ENCODE measurements at regions of chr19 and their contacts with region 1.

Region 1: GRCh38 chr19:49869441-49870176 is 2.2 kb upstream of the PNKP start:
- DNase-seq: peak; percentile 100
- ATAC-seq: peak; percentile 87
- H3K4me3 ChIP-seq: peak overlapping the region; percentile 66
- H3K27ac ChIP-seq: peak overlapping the region; percentile 70
- H3K4me1 ChIP-seq: peaks cover 26% of the 10 kb centered on the region
- H3K27me3 ChIP-seq: no peaks in the 10 kb centered on the region
- CTCF ChIP-seq: no peak; a peak in 1 of 6 replicates
- EP300 ChIP-seq: no peak; a peak in 1 of 4 replicates
- POLR2A ChIP-seq: peak; percentile 56
- RAD21 ChIP-seq: no peak

Region 2: GRCh38 chr19:49487277-49488045 is 382.1 kb before region 1 on chr19 and contains the start of gene RPL13A:
- CTCF ChIA-PET with region 1: no interaction called
- POLR2A ChIA-PET with region 1: no interaction called
- RAD21 ChIA-PET with region 1: no interaction called
- SMC1A ChIA-PET with region 1: no interaction called
- in situ Hi-C with region 1: no loop called
- intact Hi-C with region 1: loop called (anchors 5 kb)
- DNase-seq: peak; percentile 98
- ATAC-seq: peak; percentile 92
- H3K4me3 ChIP-seq: peak within 1 kb of the TSS; percentile 97
- H3K27ac ChIP-seq: peak within 1 kb of the TSS; percentile 83
- H3K4me1 ChIP-seq: peaks cover 16% of the 10 kb centered on the region
- H3K27me3 ChIP-seq: no peaks in the 10 kb centered on the region
- CTCF ChIP-seq: no peak
- EP300 ChIP-seq: no peak
- POLR2A ChIP-seq: peak; percentile 100
- RAD21 ChIP-seq: no peak
- polyA plus RNA-seq, gene RPL13A: 4,595 to 5,196 TPM

Region 3: DNA sequence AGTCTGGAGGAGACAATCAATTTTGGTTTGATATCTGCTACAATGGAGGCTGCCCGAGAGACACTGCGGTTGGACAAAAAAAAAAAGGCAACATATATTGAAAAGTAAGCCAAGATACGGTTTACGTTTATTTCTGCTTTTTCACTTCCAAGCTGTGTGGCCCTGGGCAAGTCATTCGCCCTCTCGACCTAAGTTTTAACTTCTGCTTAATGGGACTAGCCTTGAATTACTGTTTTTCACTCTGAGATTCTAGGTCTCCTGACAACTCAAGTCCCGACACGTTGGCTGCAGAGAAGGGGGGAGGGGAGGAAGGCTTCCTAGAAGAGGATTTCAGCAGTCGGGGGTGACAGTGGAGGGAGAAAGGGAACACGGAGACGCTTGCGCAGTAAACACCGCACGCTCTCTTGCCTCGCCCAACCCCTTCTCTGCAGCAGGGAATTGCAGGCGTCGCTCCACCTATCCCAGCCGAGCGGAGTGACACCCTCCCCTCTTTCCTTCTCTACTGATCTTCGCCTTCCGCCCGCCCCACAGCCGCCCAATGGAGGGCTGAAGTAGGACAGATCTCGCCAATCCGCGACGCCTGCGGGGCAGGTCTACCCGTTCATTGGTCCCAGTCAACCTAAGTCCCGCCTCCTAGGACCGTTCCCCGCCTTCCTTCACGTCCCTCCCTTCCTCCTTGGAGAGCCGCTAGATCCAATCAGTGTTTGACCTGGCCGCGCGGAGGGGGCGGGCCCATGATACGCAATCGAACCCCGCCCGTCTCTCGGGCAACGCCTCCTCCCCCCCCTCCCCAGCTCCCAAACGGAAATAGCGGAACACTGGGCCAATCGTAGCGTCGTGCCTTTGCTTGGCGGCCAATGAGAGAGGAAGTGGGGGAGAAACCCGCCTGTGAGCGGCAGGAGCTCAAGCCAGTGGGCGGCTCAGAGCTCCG is 103.3 kb before region 1 on chr19:
- CTCF ChIA-PET with region 1: no interaction called
- POLR2A ChIA-PET with region 1: interaction called, 14 read pairs
- RAD21 ChIA-PET with region 1: interaction called, 7 read pairs
- SMC1A ChIA-PET with region 1: interaction called, 4 read pairs
- in situ Hi-C with region 1: no loop called
- intact Hi-C with region 1: loop called (anchors 5 kb)
- DNase-seq: peak; percentile 100
- ATAC-seq: peak; percentile 96
- H3K4me3 ChIP-seq: peak overlapping the region; percentile 89
- H3K27ac ChIP-seq: peak overlapping the region; percentile 89
- H3K4me1 ChIP-seq: peaks cover 15% of the 10 kb centered on the region; the same call in 1 of the 2 replicates
- H3K27me3 ChIP-seq: no peaks in the 10 kb centered on the region; a peak in 1 of 4 replicates
- CTCF ChIP-seq: no peak
- EP300 ChIP-seq: no peak
- POLR2A ChIP-seq: peak; percentile 88
- RAD21 ChIP-seq: no peak

Region 4: DNA sequence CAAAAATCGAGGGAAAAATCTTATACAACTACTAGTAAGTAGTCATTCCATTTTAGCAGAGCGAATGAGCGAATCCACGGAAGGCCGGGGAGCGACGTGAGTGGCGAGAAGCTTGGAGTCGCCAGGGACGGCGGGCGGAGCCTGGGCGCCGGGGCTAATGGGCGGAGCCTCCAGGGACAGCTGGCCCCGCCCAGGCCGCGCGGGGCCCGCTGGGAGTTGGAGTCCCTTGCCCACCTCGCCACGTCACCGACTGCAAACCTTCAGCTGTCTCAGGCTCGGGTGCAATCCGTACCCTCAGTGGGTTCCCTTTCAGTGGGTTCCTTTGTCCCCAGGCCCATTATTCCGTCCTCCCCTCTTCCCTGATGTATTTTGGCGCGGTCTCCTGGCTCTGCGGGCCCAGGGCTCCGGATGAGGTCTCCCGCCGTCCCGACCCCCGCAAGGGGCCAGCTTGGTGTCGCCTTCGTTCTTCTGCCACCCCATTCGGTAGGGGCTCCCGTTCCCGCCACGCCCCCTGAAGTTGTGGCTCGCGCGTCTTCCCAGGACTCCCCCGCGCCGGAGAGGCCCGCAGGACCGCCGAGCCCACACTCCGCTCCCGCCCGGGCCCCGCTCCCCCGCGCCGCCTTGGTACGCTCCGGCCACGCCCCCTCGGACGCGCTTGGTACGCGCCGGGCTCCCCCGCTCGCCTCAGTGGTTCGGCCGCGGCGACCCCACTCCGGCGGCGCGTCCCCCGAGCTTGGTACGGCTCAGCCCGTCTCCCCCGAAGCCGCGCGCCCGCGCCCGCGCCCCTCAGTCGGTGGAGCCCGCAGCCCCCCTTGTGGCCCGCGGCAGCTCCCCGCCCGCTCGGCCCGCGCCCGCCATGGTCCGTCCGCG is 18.9 kb before region 1 on chr19 and contains the start of gene PTOV1:
- CTCF ChIA-PET with region 1: interaction called, 6 read pairs
- POLR2A ChIA-PET with region 1: interaction called, 25 read pairs
- RAD21 ChIA-PET with region 1: interaction called, 9 read pairs
- SMC1A ChIA-PET with region 1: interaction called, 5 read pairs
- in situ Hi-C with region 1: no loop called
- intact Hi-C with region 1: no loop called
- DNase-seq: peak; percentile 59
- ATAC-seq: peak; percentile 91
- H3K4me3 ChIP-seq: peak within 1 kb of the TSS; percentile 71
- H3K27ac ChIP-seq: peak within 1 kb of the TSS; percentile 64
- H3K4me1 ChIP-seq: peaks cover 26% of the 10 kb centered on the region
- H3K27me3 ChIP-seq: no peaks in the 10 kb centered on the region
- CTCF ChIP-seq: no peak
- EP300 ChIP-seq: no peak
- POLR2A ChIP-seq: peak; percentile 87
- RAD21 ChIP-seq: no peak
- polyA plus RNA-seq, gene PTOV1: 3.2 to 10.6 TPM

Region 5: DNA sequence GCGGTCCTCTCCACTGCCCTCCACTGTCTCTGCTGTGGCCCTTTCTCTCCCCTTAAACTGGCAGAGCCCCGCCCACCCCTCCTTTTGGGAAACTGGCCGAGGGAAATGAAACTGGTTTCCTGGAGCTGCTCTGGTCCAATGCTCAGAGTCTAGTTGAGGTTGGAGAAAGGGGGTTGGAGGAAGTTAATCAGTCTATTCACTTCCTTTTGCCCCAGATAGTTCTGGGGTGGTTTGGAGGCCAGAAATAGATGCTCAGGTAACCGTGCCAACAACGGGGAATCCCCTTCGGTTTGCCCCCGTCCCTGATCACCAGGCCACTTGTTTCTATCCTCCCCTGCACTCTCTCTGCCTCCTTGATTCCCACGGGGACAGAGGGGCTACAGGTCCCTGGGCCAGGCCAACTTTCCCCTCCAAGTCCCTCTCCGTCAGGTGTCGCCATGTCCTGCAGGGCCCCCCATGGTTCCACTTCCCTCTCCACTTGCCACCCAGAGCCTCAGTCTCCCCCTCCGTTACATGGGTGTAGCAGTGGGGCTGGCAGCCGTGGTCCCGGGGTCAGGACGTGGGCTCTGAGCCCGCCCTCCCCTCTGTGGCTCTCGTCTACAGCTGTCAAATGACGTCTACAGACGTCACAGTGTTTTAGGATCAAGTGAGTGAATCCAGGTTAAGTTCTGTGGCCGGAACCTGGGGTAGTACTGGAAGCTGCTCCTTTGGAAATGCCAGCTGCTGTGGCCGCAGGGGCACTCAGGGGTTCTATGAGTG is 27.4 kb after region 1 on chr19 and contains the start of gene IL4I1:
- CTCF ChIA-PET with region 1: interaction called, 4 read pairs
- POLR2A ChIA-PET with region 1: interaction called, 16 read pairs
- RAD21 ChIA-PET with region 1: interaction called, 11 read pairs
- SMC1A ChIA-PET with region 1: interaction called, 9 read pairs
- in situ Hi-C with region 1: no loop called
- intact Hi-C with region 1: no loop called
- DNase-seq: peak; percentile 96
- ATAC-seq: peak; percentile 57
- H3K4me3 ChIP-seq: peak within 1 kb of the TSS; percentile 77
- H3K27ac ChIP-seq: peak within 1 kb of the TSS; percentile 91
- H3K4me1 ChIP-seq: peaks cover 40% of the 10 kb centered on the region
- H3K27me3 ChIP-seq: no peaks in the 10 kb centered on the region
- CTCF ChIP-seq: no peak
- EP300 ChIP-seq: peak; percentile 42 to 81; a peak in 3 of 4 replicates
- POLR2A ChIP-seq: peak; percentile 69
- RAD21 ChIP-seq: no peak
- polyA plus RNA-seq, gene IL4I1: 0.62 to 1.00 TPM

Region 6: GRCh38 chr19:49929611-49930482 is 60.2 kb after region 1 on chr19:
- CTCF ChIA-PET with region 1: interaction called, 3 read pairs
- POLR2A ChIA-PET with region 1: interaction called, 30 read pairs
- RAD21 ChIA-PET with region 1: interaction called, 17 read pairs
- SMC1A ChIA-PET with region 1: interaction called, 9 read pairs
- in situ Hi-C with region 1: no loop called
- intact Hi-C with region 1: no loop called
- DNase-seq: peak; percentile 90
- ATAC-seq: peak; percentile 83
- H3K4me3 ChIP-seq: peak overlapping the region; percentile 92
- H3K27ac ChIP-seq: peak overlapping the region; percentile 94
- H3K4me1 ChIP-seq: peaks cover 15% of the 10 kb centered on the region
- H3K27me3 ChIP-seq: no peaks in the 10 kb centered on the region
- CTCF ChIP-seq: no peak
- EP300 ChIP-seq: no peak
- POLR2A ChIP-seq: peak; percentile 94
- RAD21 ChIP-seq: no peak

Measured in GM12878 (cell line).